ENCODE measurements at regions of chr2 and their contacts with region 1.

Region 1: DNA sequence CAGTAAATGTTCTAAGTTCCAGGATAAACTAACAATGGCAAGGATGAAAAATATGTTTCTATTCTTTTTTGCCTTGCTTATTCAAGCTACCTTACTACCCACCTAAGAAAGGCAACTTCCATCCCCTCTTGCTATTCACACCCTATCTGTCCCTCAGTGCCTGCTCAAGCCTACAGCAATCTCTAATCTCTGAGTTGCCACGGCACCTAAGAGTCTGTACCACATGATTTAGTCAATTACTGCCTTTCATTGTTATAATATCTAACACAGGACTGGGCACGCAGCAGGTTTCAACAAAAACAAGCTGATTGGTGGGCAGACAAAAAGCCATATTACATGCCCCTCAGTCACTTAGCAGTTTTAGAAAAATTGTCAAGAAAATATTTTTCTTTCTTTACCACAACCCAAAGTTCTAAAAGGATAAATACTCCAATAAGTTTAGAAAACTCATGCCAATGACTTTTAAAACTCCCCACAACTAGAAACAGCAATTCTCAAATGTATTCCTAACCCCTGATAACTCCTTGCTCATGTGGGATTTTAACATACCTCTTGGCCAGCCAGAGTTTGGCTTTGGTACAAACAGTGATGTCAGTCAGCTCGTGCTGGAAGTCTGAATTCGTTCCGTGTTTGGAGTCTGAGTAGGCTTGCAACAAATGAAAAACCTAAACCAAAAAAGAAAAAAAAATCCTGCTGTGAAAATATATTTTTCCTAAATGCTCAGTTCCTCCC is 117.3 kb upstream of the ZFP36L2 start:
- DNase-seq: peak; percentile 86

Region 2: GRCh38 chr2:43399515-43400264 is 56.0 kb after region 1 on chr2:
- intact Hi-C with region 1: no loop called
- DNase-seq: no peak

Region 3: DNA sequence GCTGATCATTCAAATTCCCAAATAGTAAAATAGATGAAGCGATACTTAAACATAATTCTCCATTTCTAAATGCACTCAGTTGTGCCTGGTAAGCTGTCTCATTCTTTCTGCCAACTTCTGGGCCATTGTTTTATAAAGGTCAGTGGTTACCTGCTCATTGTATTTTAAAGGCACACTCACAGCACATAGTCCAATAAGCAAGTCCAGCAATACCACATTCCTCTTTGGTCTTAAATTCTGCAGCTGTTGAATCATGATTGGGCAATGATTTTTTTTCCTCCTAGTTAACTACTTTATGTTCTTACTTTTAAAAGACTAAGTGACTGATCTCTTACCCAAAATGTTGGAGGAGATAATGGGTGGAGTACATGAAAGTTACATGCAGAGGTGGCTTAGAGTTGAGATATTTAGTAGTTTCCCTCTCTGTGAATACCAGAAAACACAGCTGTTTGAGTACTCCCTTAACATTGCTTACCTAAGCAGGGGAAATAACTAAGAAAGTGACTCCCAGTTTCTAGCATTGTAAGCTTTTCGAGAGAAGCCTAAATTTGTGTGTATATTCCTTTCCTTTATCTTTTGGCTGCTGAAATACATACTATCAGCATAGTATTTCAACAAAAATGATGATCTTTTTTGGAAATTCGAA is 1238.7 kb after region 1 on chr2:
- intact Hi-C with region 1: loop called in 1 of 2 experiments (anchors 10 kb)
- DNase-seq: no peak